Cardiac septum (tissue), 1 donor: ENCODE measurements at regions of chr13 and their contacts with region 1.

Region 1: DNA sequence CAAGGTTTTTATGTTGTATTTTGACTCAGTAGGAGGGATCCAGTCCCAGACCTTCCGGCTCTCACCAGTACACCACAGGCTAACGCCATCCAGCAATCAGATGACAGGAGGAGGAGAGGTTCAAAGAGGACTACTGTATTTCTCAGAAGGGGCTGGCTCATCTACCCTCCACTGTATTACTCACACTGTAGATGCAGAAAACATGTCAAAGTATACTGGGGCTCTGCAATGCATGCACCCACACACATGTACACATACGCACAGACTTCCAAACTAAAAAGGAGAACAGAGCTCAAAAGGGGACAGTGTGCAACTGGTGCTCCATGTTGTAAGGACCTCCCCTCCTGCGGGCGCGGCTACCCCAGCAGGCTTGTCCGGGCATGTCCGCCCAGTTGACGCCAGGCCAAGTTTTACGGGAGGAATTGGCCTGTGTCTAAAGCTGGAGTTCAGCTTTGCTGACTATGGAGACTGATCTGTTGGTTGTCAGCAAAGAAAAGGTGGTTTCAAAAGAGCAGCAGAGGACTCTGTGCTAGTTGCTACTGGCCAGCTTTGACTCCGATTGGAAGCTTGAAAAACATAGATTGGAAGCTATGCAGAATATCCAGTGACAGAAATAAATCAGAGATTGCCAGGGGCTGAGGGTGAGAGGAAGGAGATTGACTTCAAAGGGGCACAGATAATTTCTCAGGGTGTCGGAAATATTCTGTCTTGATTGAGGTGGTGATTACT is 314.2 kb downstream of the DLEU7 start:
- DNase-seq: peak; percentile 88

Region 2: DNA sequence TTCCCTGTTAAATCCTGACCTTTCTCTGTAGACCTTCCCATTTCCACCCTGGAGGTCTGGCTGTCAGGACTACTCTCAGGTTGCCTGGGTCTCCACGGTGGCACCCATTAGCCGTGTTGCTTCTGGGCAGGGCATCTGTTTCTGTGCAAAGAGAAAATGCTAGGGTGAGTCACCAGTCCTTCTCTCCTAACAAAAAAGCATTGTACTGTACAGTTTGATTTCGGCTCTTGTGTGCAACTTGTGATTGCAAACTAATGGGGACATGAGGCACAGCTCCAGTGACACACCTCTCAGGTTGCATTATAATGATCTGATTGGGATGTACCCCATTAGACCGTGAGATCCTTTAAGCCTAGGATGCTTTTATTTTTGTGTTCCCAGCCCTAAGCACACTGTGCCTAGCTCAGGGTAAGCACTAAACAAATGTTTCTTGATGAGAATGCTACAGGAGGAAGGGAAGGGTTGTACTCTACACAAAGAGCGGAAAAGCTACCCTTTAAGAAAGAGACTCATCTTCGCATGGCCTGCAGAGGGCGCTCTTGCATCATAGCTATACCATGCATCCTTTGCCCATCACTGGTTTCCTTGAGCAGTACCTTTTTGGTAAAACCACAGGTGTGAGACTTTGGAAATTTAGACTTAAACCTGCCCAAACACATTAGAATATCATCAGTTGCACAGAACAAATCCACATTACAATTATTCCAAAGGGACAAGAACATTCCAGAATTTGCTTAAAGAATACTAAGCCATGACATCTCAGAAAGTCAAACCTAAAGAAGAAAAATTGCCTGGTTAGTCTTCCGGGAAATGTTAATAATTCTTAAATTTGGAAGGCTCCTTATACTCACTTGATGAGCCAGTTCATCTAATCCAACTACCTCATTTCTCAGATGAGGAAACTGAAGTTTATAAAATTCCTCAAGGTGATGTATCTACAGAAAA is 552.7 kb before region 1 on chr13:
- intact Hi-C with region 1: loop called (anchors 2 kb)
- DNase-seq: peak; percentile 79

Region 3: GRCh38 chr13:50081679-50082425 is 447.5 kb before region 1 on chr13:
- intact Hi-C with region 1: loop called (anchors 2 kb)
- DNase-seq: peak; percentile 99

Region 4: DNA sequence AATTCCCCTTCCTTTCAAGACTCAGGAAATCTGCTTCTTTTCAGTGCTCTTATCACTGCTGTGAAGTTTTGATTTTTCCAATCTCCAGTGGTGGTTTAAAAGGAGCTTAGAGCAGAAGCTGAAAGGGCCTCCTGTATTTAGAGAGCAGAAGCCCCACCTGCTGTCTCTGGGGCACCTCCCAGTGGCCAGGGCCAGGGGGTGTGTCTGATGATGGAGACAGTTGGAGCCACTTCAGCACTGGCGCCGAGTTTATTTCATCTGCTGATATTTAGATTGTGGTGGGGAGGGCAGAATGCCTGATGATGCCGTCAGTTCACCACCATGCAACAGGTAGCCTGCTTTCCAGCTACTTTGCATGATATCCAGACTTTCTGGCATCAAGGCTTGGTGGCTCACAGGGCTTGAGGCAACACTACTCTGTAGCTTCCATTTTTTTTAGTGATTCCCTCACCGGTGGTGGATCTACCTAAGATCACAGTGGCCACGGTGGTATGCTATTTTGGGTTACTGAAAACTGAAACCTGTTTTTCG is 142.2 kb before region 1 on chr13:
- intact Hi-C with region 1: loop called (anchors 5 kb)
- DNase-seq: peak; percentile 86